Heart right ventricle (tissue), 16 donors: ENCODE measurements at regions of chr9 and their contacts with region 1.

Region 1: GRCh38 chr9:114216081-114216480 is 60.7 kb downstream of the COL27A1 start:
- DNase-seq: peak; percentile 61 to 65
- ATAC-seq: peak; percentile 60 to 87 (median 77)
- H3K4me3 ChIP-seq: no peak overlapping the region
- H3K27ac ChIP-seq: peak overlapping the region in 3 of 10 donors; percentile 35 to 57 (median 57)
- H3K4me1 ChIP-seq: peaks cover 6 to 43% (median 27%) of the 10 kb centered on the region in 9 donors
- H3K27me3 ChIP-seq: no peaks in the 10 kb centered on the region
- CTCF ChIP-seq: no peak

Region 2: DNA sequence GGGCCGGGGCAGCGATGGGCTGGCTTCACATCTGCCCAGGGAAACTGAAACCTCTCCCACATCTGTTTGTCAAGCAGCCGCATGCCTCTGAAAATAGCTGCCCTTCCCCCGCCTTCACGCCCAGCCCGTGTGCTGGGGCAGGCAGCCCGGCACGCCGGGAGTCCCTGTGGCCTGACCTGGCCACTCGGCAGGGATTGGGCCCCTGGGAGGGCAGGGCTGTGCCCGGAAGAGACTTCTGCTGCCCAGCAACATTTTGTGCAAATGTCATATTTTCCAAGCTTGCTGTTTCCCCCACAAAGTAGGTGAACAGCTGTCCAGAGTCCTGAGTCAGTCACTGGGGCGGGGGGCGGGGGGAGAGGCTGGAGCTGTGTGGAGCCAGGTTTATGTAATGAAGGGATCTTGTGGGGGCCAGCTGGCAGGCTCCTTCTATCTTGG is 52.5 kb before region 1 on chr9:
- intact Hi-C with region 1: loop called in 1 of 10 experiments (anchors 10 kb)
- DNase-seq: peak; percentile 54 to 57
- ATAC-seq: peak; percentile 64 to 91 (median 81)
- H3K4me3 ChIP-seq: peak overlapping the region in 2 of 10 donors; percentile 3 to 15
- H3K27ac ChIP-seq: peak overlapping the region in 4 of 10 donors; percentile 15 to 47 (median 28)
- H3K4me1 ChIP-seq: peaks cover 4 to 41% (median 22%) of the 10 kb centered on the region in 9 donors
- H3K27me3 ChIP-seq: no peaks in the 10 kb centered on the region
- CTCF ChIP-seq: no peak

Region 3: DNA sequence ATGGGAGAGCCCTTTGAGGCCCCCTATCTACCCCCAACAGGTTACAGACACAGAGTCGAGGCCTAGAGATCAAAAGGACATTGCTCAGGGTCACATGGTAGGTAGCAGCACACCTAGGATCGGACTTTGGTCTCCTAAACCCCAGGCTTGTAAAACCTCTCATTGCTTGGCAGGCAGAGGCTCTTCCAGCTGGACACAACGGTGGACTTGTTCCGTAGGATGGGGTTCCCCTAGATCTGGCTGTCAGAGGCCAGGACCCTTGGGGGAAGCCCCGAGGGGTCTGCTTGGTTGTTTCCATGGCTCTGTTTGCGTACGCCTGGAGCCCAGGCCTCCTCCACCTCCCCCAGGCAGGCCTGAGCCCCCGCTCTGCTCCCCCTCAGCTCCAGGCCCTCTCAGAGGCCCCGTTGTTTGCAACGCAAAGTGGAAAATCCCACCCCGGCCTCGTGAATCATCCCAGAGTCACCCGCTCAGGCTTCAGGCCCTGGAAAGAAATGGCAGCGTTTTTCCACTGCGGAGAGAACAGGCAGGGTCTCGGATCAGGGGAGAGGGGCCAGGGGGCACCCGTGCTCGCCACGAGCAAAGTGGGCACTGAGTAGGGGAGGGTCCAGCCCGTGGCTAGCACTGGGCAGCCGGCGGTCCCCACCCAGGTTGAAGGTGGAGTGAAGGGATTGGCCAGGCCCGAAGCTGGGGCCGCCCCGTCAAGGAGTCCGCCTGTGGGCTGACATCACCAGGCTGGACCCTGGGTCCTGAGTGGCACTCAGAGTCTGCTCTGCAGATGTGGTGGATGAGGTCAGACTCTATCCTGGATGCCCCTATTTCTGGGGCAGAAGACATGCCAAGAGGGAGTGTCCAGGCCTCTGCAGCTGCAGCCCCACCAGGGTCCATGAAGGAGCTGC is 41.0 kb before region 1 on chr9:
- intact Hi-C with region 1: loop called in 1 of 10 experiments (anchors 5 kb)
- DNase-seq: peak; percentile 45 to 73
- ATAC-seq: peak; percentile 59 to 85 (median 74)
- H3K4me3 ChIP-seq: no peak overlapping the region
- H3K27ac ChIP-seq: peak overlapping the region; percentile 3 to 91 (median 72)
- H3K4me1 ChIP-seq: peaks cover 22 to 86% (median 63%) of the 10 kb centered on the region in 9 donors
- H3K27me3 ChIP-seq: no peaks in the 10 kb centered on the region
- CTCF ChIP-seq: no peak